Sciatic nerve (tissue), 2 donors: ENCODE measurements at regions of chr11 and their contacts with region 1.

Region 1: GRCh38 chr11:112280268-112281126 is 19.8 kb upstream of the PLET1 start:
- DNase-seq: peak; percentile 78
- ATAC-seq: peak; percentile 95

Region 2: GRCh38 chr11:112100462-112100861 is 180.0 kb before region 1 on chr11:
- intact Hi-C with region 1: loop called (anchors 10 kb)
- DNase-seq: no peak
- ATAC-seq: no peak

Region 3: GRCh38 chr11:112163875-112164685 is 116.4 kb before region 1 on chr11 and contains the start of gene IL18:
- intact Hi-C with region 1: no loop called
- DNase-seq: peak; percentile 66
- ATAC-seq: peak; percentile 78
- total RNA-seq, gene IL18: 20.3 TPM

Region 4: GRCh38 chr11:112174789-112175598 is 105.5 kb before region 1 on chr11 and contains the start of gene BCO2:
- intact Hi-C with region 1: no loop called
- DNase-seq: peak; percentile 93
- ATAC-seq: peak; percentile 99
- total RNA-seq, gene BCO2: 15.6 TPM

Region 5: GRCh38 chr11:112219476-112220232 is 60.8 kb before region 1 on chr11:
- intact Hi-C with region 1: loop called (anchors 5 kb)
- DNase-seq: no peak
- ATAC-seq: peak; percentile 97